Ovary (tissue), 10 donors: ENCODE measurements at regions of chr4 and their contacts with region 1.

Region 1: DNA sequence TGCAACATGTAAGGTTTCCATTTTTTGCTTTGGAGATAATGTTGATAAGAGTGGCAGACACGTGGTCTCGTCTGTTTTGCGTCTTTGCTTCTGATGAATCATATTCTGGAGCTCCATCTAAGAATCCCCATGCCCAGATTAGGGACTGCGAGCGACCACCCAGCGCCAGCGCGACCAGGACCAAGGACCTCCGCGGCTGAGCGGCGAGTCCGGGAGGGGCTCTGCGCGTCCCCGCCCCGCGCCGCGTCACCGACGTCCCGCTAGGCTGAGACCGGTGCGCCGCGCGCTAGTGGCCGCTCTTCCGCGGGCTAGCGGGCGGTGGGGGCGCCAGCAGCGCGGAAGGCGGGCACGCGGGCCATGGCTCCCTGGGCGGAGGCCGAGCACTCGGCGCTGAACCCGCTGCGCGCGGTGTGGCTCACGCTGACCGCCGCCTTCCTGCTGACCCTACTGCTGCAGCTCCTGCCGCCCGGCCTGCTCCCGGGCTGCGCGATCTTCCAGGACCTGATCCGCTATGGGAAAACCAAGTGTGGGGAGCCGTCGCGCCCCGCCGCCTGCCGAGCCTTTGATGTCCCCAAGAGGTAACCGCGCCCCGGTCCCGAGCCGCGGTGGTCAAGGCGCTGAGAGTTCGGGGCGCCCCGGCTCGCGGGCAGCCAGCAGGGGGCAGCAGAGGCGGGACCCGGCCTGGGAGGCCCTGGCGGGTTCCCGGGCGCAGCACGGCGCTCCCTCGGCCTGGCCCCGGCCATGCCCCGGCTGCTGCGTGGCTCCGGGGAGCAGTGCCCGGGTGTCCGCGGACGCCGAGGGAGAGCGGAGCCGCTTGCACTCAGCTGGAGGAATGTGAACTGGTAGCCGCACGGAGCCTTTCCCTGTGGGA is at the start of gene SRD5A3:
- DNase-seq: peak; percentile 75 to 91 (median 85)
- H3K4me3 ChIP-seq: peak within 1 kb of the TSS; percentile 55
- H3K27ac ChIP-seq: peak within 1 kb of the TSS; percentile 86
- H3K4me1 ChIP-seq: no peaks in the 10 kb centered on the region
- H3K27me3 ChIP-seq: no peaks in the 10 kb centered on the region
- CTCF ChIP-seq: peak; percentile 91 to 94 (median 94)
- EP300 ChIP-seq: no peak
- POLR2A ChIP-seq: no peak
- total RNA-seq, gene SRD5A3: 1.2 to 9.4 (median 2.9) TPM

Region 2: GRCh38 chr4:55386073-55386472 is 39.9 kb after region 1 on chr4:
- intact Hi-C with region 1: loop called in 1 of 4 experiments (anchors 5 kb)
- DNase-seq: no peak
- H3K4me3 ChIP-seq: no peak overlapping the region
- H3K27ac ChIP-seq: no peak overlapping the region
- H3K4me1 ChIP-seq: no peaks in the 10 kb centered on the region
- H3K27me3 ChIP-seq: no peaks in the 10 kb centered on the region
- CTCF ChIP-seq: no peak
- EP300 ChIP-seq: no peak
- POLR2A ChIP-seq: no peak

Region 3: GRCh38 chr4:55395529-55396307 is 49.5 kb after region 1 on chr4 and contains the start of gene TMEM165:
- intact Hi-C with region 1: loop called in 1 of 4 experiments (anchors 5 kb)
- DNase-seq: peak; percentile 88 to 91 (median 89)
- H3K4me3 ChIP-seq: peak within 1 kb of the TSS; percentile 85
- H3K27ac ChIP-seq: peak within 1 kb of the TSS; percentile 92 to 95
- H3K4me1 ChIP-seq: peaks cover 5% of the 10 kb centered on the region
- H3K27me3 ChIP-seq: no peaks in the 10 kb centered on the region
- CTCF ChIP-seq: peak in 1 of 3 donors; percentile 11
- EP300 ChIP-seq: peak; percentile 32
- POLR2A ChIP-seq: peak; percentile 90
- total RNA-seq, gene TMEM165: 54.6 to 230 (median 84.1) TPM

Region 4: GRCh38 chr4:55546756-55547465 is 200.7 kb after region 1 on chr4 and contains the start of gene CLOCK:
- intact Hi-C with region 1: loop called (anchors 5 to 10 kb)
- DNase-seq: peak; percentile 86 to 93 (median 91)
- H3K4me3 ChIP-seq: peak within 1 kb of the TSS; percentile 78
- H3K27ac ChIP-seq: peak within 1 kb of the TSS; percentile 94 to 99
- H3K4me1 ChIP-seq: no peaks in the 10 kb centered on the region
- H3K27me3 ChIP-seq: no peaks in the 10 kb centered on the region
- CTCF ChIP-seq: peak; percentile 47 to 70 (median 70)
- EP300 ChIP-seq: no peak
- POLR2A ChIP-seq: peak; percentile 58
- total RNA-seq, gene CLOCK: 16.1 to 36.4 (median 34.6) TPM

Region 5: DNA sequence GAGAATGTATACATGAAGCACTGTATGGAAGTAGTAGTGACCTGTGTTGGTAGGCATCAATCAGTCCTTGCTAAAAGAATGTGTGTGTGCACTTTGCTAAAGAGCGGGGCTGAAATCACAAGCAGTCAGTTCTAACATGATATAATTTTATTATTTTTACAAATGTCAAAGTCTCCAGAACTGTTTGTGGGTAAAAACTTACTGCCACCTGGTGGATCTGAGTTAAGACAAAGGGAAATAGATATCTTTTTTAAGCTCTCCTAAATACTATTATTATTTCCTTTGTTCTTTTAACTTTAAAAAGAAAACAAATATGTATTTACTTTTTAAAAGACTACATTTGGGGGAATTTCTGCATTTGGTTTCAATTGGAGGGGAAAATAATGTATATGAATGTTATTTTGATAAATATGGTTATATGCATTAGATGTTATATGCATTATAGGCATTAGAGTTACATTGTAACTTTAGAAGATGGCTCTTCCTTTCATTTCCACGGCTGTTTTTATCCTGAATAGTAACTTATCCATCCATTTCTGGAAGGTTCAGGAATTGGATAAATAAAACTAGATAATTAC is 208.3 kb after region 1 on chr4:
- intact Hi-C with region 1: loop called (anchors 5 to 10 kb)
- DNase-seq: no peak
- H3K4me3 ChIP-seq: no peak overlapping the region
- H3K27ac ChIP-seq: no peak overlapping the region
- H3K4me1 ChIP-seq: no peaks in the 10 kb centered on the region
- H3K27me3 ChIP-seq: no peaks in the 10 kb centered on the region
- CTCF ChIP-seq: peak; percentile 13 to 37 (median 28)
- EP300 ChIP-seq: no peak
- POLR2A ChIP-seq: no peak

Region 6: GRCh38 chr4:55635741-55636655 is 289.8 kb after region 1 on chr4 and contains the start of gene NMU:
- intact Hi-C with region 1: no loop called
- DNase-seq: peak in 2 of 5 donors; percentile 15 to 31
- H3K4me3 ChIP-seq: peak within 1 kb of the TSS; percentile 9
- H3K27ac ChIP-seq: no peak within 1 kb of the TSS
- H3K4me1 ChIP-seq: peaks cover 6% of the 10 kb centered on the region
- H3K27me3 ChIP-seq: no peaks in the 10 kb centered on the region
- CTCF ChIP-seq: no peak
- EP300 ChIP-seq: no peak
- POLR2A ChIP-seq: no peak
- total RNA-seq, gene NMU: 0.77 TPM in 1 of 7 donors, not detected in the others